Mammary epithelial cell (primary cell): ENCODE measurements at regions of chr9 and their contacts with region 1.

Region 1: GRCh38 chr9:132079391-132080091 is at the start of gene MED27:
- DNase-seq: peak; percentile 86
- H3K4me3 ChIP-seq: peak within 1 kb of the TSS; percentile 68 to 88 (median 88)
- H3K27ac ChIP-seq: peak within 1 kb of the TSS; percentile 87
- H3K4me1 ChIP-seq: peaks cover 34% of the 10 kb centered on the region
- H3K27me3 ChIP-seq: no peaks in the 10 kb centered on the region
- CTCF ChIP-seq: no peak
- total RNA-seq, gene MED27: 31.8 to 39.8 TPM

Region 2: DNA sequence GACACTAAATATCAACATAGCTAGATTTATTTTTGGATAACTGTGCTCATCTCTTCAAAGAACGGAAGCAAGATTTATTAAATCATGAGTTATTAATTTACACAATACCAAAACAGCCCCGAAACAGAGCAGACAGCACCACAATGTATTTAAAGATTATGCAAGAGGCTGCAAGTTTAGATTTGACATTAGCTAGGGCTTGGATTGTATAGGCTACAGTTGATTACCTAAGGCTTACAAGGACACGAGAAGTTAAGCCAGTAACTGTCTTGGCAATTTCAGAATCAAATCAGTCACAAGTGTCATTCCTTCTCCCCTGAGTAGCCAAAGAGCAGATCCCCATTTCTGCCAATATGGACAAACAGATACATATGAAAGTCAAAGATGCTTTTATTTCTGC is 152.4 kb before region 1 on chr9:
- CTCF ChIA-PET with region 1: no interaction called
- dilution Hi-C with region 1: no loop called
- in situ Hi-C with region 1: no loop called
- intact Hi-C with region 1: no loop called
- DNase-seq: no peak
- H3K4me3 ChIP-seq: no peak overlapping the region
- H3K27ac ChIP-seq: no peak overlapping the region
- H3K4me1 ChIP-seq: no peaks in the 10 kb centered on the region
- H3K27me3 ChIP-seq: no peaks in the 10 kb centered on the region
- CTCF ChIP-seq: no peak

Region 3: DNA sequence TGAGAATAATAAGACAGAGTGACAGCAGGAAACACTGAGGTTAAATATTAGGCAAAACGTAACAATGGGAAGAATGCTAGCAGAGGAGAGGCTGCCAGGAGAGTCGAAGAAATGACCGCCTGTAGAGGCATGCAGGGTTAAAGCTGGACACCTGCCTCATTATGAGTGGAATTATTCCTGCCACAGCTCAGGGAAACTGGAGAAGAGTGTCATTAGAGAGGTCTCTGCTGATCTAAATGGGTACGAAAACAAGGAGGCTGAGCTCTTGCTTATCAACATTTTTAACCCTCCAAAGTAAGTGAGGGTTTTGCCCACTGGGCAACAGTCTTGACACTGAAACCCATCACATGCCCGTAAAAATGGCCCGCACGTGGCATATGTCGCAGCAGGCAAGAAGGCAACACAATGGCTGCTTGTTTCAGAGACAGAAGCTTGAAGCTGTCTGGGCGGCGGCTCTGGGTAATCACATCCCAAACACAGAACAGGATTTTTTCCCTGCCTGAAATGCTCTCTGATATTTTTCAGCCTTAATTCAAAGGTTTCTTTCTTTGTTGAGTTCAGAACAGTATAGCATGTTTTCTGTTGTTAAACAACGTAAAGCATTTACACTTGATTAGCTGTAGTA is 118.6 kb before region 1 on chr9:
- CTCF ChIA-PET with region 1: no interaction called
- dilution Hi-C with region 1: no loop called
- in situ Hi-C with region 1: no loop called
- intact Hi-C with region 1: loop called (anchors 10 kb)
- DNase-seq: peak; percentile 31
- H3K4me3 ChIP-seq: no peak overlapping the region
- H3K27ac ChIP-seq: no peak overlapping the region
- H3K4me1 ChIP-seq: peaks cover 18% of the 10 kb centered on the region
- H3K27me3 ChIP-seq: no peaks in the 10 kb centered on the region
- CTCF ChIP-seq: no peak

Region 4: GRCh38 chr9:132006677-132007370 is 72.7 kb before region 1 on chr9:
- CTCF ChIA-PET with region 1: no interaction called
- dilution Hi-C with region 1: no loop called
- in situ Hi-C with region 1: no loop called
- intact Hi-C with region 1: loop called (anchors 2 kb)
- DNase-seq: peak; percentile 80
- H3K4me3 ChIP-seq: no peak overlapping the region
- H3K27ac ChIP-seq: peak overlapping the region; percentile 81
- H3K4me1 ChIP-seq: peaks cover 51% of the 10 kb centered on the region
- H3K27me3 ChIP-seq: no peaks in the 10 kb centered on the region
- CTCF ChIP-seq: no peak

Region 5: GRCh38 chr9:132160802-132161742 is 81.5 kb after region 1 on chr9:
- CTCF ChIA-PET with region 1: no interaction called
- dilution Hi-C with region 1: no loop called
- in situ Hi-C with region 1: no loop called
- intact Hi-C with region 1: loop called (anchors 5 kb)
- DNase-seq: peak; percentile 57
- H3K4me3 ChIP-seq: peak overlapping the region; percentile 54 to 61 (median 59)
- H3K27ac ChIP-seq: no peak overlapping the region
- H3K4me1 ChIP-seq: peaks cover 17% of the 10 kb centered on the region
- H3K27me3 ChIP-seq: peaks cover 22% of the 10 kb centered on the region
- CTCF ChIP-seq: no peak